Heart left ventricle (tissue), 16 donors: ENCODE measurements at regions of chr5 and their contacts with region 1.

Region 1: GRCh38 chr5:112012104-112012503 is 255.1 kb upstream of the NREP start:
- DNase-seq: peak in 2 of 5 donors; percentile 22 to 32
- ATAC-seq: peak in 3 of 4 donors; percentile 32 to 92 (median 53)
- H3K4me3 ChIP-seq: no peak overlapping the region
- H3K27ac ChIP-seq: peak overlapping the region in 6 of 12 donors; percentile 15 to 54 (median 40)
- H3K4me1 ChIP-seq: peaks cover 0 to 19% (median 12%) of the 10 kb centered on the region in 12 donors
- H3K27me3 ChIP-seq: no peaks in the 10 kb centered on the region
- CTCF ChIP-seq: no peak
- POLR2A ChIP-seq: no peak

Region 2: GRCh38 chr5:112097768-112098167 is 85.7 kb after region 1 on chr5:
- intact Hi-C with region 1: loop called in 1 of 10 experiments (anchors 10 kb)
- DNase-seq: no peak
- ATAC-seq: no peak
- H3K4me3 ChIP-seq: peak overlapping the region in 1 of 12 donors; percentile 18
- H3K27ac ChIP-seq: no peak overlapping the region
- H3K4me1 ChIP-seq: no peaks in the 10 kb centered on the region
- H3K27me3 ChIP-seq: no peaks in the 10 kb centered on the region
- CTCF ChIP-seq: no peak
- POLR2A ChIP-seq: no peak